ENCODE measurements at regions of chr2 and their contacts with region 1.

Region 1: DNA sequence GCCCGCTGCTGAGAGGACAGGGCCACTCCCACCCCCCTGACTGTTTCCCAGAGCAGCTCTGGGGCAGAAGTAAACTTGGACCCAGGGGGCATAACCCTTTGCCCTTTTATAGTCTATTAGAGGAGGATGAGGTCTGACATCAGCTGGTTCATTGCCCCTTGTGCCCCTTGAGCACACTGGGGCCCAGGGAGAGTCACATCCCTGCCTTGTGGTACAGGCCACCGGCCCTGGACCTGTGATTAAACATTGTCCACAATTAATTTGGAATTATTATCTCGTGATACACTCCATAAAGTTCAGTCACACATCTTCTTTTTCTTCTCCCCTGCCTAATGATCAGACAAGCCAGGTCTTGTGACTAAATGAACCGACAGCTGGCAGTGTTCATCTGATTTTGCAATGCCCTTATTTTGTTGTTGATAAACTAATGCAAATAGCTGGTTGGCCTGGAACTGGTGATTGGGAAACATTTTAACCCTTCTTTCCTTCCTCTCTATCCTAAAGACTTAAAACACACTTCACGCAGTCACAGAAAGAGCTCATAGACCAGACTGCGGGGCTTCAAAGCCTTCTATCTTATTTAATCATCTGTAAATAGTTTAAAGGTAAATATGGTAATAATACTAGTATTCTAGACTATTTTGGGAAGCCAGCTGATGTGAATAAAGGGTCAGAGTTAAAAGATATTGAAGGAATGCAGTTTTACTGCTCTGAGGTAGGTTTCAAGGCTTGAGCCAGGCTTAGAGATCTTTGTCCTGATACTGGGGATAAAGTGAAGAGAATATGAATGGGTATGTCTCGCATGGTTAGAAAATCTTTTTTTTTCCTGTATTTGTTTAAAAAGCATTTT is 13.3 kb downstream of the IL1R1 start:
- DNase-seq: peak; percentile 100
- ATAC-seq: peak; percentile 91
- H3K4me3 ChIP-seq: peak overlapping the region in 1 of 3 experiments; percentile 21; a peak in 2 of 6 replicates
- H3K27ac ChIP-seq: peak overlapping the region; percentile 80
- H3K4me1 ChIP-seq: peaks cover 84% of the 10 kb centered on the region
- H3K27me3 ChIP-seq: no peaks in the 10 kb centered on the region
- CTCF ChIP-seq: peak; percentile 37; the same call in 1 of the 2 replicates
- EP300 ChIP-seq: peak; percentile 68 to 99; a peak in 3 of 4 replicates
- POLR2A ChIP-seq: peak in 1 of 2 experiments; percentile 18; a peak in 1 of 4 replicates
- RAD21 ChIP-seq: peak; percentile 42; the same call in 1 of the 2 replicates

Region 2: GRCh38 chr2:102020596-102021181 is 135.2 kb before region 1 on chr2:
- CTCF ChIA-PET with region 1: no interaction called
- POLR2A ChIA-PET with region 1: interaction called, 7 read pairs
- in situ Hi-C with region 1: loop called (anchors 5 kb)
- intact Hi-C with region 1: loop called (anchors 2 kb)
- DNase-seq: peak; percentile 80
- ATAC-seq: peak; percentile 95
- H3K4me3 ChIP-seq: no peak overlapping the region
- H3K27ac ChIP-seq: no peak overlapping the region
- H3K4me1 ChIP-seq: peaks cover 57% of the 10 kb centered on the region
- H3K27me3 ChIP-seq: no peaks in the 10 kb centered on the region
- CTCF ChIP-seq: peak; percentile 100
- EP300 ChIP-seq: no peak; a peak in 1 of 4 replicates
- POLR2A ChIP-seq: no peak
- RAD21 ChIP-seq: peak; percentile 99

Region 3: DNA sequence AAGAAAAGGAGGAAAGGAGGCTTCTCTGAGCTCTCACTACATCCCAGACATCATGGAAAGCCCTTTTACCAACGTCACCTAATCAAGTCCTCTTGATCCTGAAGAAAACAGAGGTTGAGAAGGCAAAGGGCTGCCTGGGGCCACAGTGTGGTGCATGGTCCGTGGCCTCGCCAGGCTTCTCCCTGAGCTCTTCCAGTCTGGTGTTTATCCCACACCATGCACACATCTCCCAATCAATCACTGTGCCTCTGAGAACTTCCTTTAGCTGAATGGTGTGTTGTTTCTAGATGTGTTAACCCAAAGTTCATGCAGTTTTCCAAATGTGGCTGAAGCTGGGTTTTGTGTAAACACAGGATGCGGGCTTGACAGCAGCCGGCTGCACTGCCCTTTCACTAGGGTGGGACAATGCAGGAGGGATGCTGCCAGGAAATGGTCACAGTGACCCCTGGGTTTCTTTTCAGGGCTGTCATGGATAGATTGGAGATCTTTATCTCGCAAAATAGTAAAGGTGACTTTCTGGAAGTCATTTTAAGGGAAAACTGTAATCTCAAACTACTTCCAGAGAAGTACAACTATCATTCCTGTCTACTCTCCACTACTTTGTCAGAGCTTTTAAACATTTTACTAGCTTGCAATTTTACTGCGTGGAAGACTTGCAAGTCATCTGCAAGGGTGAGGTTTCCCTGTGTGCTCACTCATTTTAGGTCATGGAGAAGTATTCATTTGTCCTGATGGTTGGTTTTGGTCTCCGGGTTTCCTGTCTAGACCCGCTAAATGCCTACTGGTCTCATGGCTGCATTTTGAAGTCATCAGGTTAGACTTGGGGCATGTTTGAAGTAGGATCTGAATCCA is 109.5 kb before region 1 on chr2:
- CTCF ChIA-PET with region 1: no interaction called
- POLR2A ChIA-PET with region 1: interaction called, 17 read pairs
- in situ Hi-C with region 1: no loop called
- intact Hi-C with region 1: no loop called
- DNase-seq: peak; percentile 98
- ATAC-seq: peak; percentile 98
- H3K4me3 ChIP-seq: peak overlapping the region in 1 of 3 experiments; percentile 2; a peak in 1 of 6 replicates
- H3K27ac ChIP-seq: peak overlapping the region; percentile 83
- H3K4me1 ChIP-seq: peaks cover 92% of the 10 kb centered on the region
- H3K27me3 ChIP-seq: no peaks in the 10 kb centered on the region
- CTCF ChIP-seq: peak; percentile 50
- EP300 ChIP-seq: peak in 1 of 2 experiments; percentile 95; a peak in 2 of 4 replicates
- POLR2A ChIP-seq: peak; percentile 42 to 74; a peak in 2 of 4 replicates
- RAD21 ChIP-seq: peak; percentile 65; the same call in 1 of the 2 replicates

Region 4: GRCh38 chr2:102063941-102064678 is 91.8 kb before region 1 on chr2:
- CTCF ChIA-PET with region 1: no interaction called
- POLR2A ChIA-PET with region 1: interaction called, 20 read pairs
- in situ Hi-C with region 1: no loop called
- intact Hi-C with region 1: loop called (anchors 2 kb)
- DNase-seq: peak; percentile 88
- ATAC-seq: peak; percentile 84
- H3K4me3 ChIP-seq: peak overlapping the region in 1 of 3 experiments; percentile 7; a peak in 2 of 6 replicates
- H3K27ac ChIP-seq: peak overlapping the region; percentile 71
- H3K4me1 ChIP-seq: peaks cover 82% of the 10 kb centered on the region
- H3K27me3 ChIP-seq: no peaks in the 10 kb centered on the region
- CTCF ChIP-seq: no peak
- EP300 ChIP-seq: peak in 1 of 2 experiments; percentile 67; a peak in 1 of 4 replicates
- POLR2A ChIP-seq: no peak; a peak in 1 of 4 replicates
- RAD21 ChIP-seq: no peak

Region 5: GRCh38 chr2:102103992-102104871 is 51.6 kb before region 1 on chr2:
- CTCF ChIA-PET with region 1: no interaction called
- POLR2A ChIA-PET with region 1: interaction called, 24 read pairs
- in situ Hi-C with region 1: no loop called
- intact Hi-C with region 1: loop called (anchors 1 kb)
- DNase-seq: no peak
- ATAC-seq: no peak
- H3K4me3 ChIP-seq: no peak overlapping the region
- H3K27ac ChIP-seq: peak overlapping the region; percentile 26
- H3K4me1 ChIP-seq: peaks cover 98% of the 10 kb centered on the region
- H3K27me3 ChIP-seq: no peaks in the 10 kb centered on the region
- CTCF ChIP-seq: no peak
- EP300 ChIP-seq: no peak
- POLR2A ChIP-seq: no peak
- RAD21 ChIP-seq: no peak

Region 6: GRCh38 chr2:102520028-102520427 is 364.2 kb after region 1 on chr2:
- CTCF ChIA-PET with region 1: no interaction called
- POLR2A ChIA-PET with region 1: no interaction called
- in situ Hi-C with region 1: no loop called
- intact Hi-C with region 1: no loop called
- DNase-seq: peak; percentile 56
- ATAC-seq: peak; percentile 92
- H3K4me3 ChIP-seq: no peak overlapping the region
- H3K27ac ChIP-seq: no peak overlapping the region
- H3K4me1 ChIP-seq: peaks cover 16% of the 10 kb centered on the region
- H3K27me3 ChIP-seq: no peaks in the 10 kb centered on the region; a peak in 1 of 5 replicates
- CTCF ChIP-seq: peak; percentile 84
- EP300 ChIP-seq: no peak
- POLR2A ChIP-seq: no peak
- RAD21 ChIP-seq: peak; percentile 63

Region 7: DNA sequence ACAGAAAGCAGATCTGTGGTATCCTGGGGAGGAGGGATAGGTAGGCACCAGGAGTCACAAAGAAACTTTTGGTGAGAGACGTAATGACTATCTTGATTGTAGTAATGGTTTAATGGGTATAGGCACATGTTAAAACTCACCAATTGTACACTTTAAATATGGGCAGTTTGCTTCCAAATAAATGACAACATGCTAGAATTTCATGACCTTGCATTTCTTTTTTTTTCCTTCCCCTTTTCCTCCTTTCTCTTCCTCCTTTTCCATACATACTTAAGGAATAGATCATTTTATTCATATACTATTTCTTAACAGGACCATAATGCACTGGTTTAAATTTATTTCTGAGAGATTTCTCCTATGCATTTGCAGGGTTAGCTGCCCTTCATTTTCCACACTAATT is 947.8 kb after region 1 on chr2:
- CTCF ChIA-PET with region 1: no interaction called
- POLR2A ChIA-PET with region 1: no interaction called
- in situ Hi-C with region 1: no loop called
- intact Hi-C with region 1: no loop called
- DNase-seq: no peak
- ATAC-seq: no peak
- H3K4me3 ChIP-seq: no peak overlapping the region
- H3K27ac ChIP-seq: no peak overlapping the region
- H3K4me1 ChIP-seq: no peaks in the 10 kb centered on the region
- H3K27me3 ChIP-seq: no peaks in the 10 kb centered on the region
- CTCF ChIP-seq: no peak
- EP300 ChIP-seq: no peak
- POLR2A ChIP-seq: no peak
- RAD21 ChIP-seq: no peak

Measured in HepG2 (cell line).